T-cell (primary cell): ENCODE measurements at regions of chr1 and their contacts with region 1.

Region 1: GRCh38 chr1:27618341-27619082 is 14.6 kb upstream of the AHDC1 start:
- DNase-seq: peak in 30 of 35 experiments; percentile 12 to 78 (median 48)
- ATAC-seq: peak; percentile 93 to 99 (median 96)
- H3K4me3 ChIP-seq: no peak overlapping the region
- H3K4me3 Mint-ChIP-seq: peak overlapping the region in 2 of 3 donors; percentile 7 to 37
- H3K27ac ChIP-seq: peak overlapping the region; percentile 74
- H3K27ac Mint-ChIP-seq: peak overlapping the region; percentile 94 to 97
- H3K4me1 ChIP-seq: peaks cover 46 to 86% of the 10 kb centered on the region in 2 experiments
- H3K4me1 Mint-ChIP-seq: peaks cover 58 to 65% (median 63%) of the 10 kb centered on the region in 3 donors
- H3K27me3 ChIP-seq: no peaks in the 10 kb centered on the region
- H3K27me3 Mint-ChIP-seq: no peaks in the 10 kb centered on the region

Region 2: GRCh38 chr1:27300341-27301051 is 318.0 kb before region 1 on chr1:
- CTCF ChIA-PET with region 1: no interaction called
- POLR2A ChIA-PET with region 1: interaction called in 1 of 2 experiments, 19 read pairs
- DNase-seq: peak; percentile 46 to 92 (median 70)
- ATAC-seq: peak; percentile 83 to 90 (median 88)
- H3K4me3 ChIP-seq: no peak overlapping the region
- H3K4me3 Mint-ChIP-seq: no peak overlapping the region
- H3K27ac ChIP-seq: no peak overlapping the region
- H3K27ac Mint-ChIP-seq: no peak overlapping the region
- H3K4me1 ChIP-seq: peaks cover 0 to 8% of the 10 kb centered on the region in 2 experiments
- H3K4me1 Mint-ChIP-seq: peaks cover 0 to 5% (median 2%) of the 10 kb centered on the region in 3 donors
- H3K27me3 ChIP-seq: no peaks in the 10 kb centered on the region
- H3K27me3 Mint-ChIP-seq: no peaks in the 10 kb centered on the region

Region 3: DNA sequence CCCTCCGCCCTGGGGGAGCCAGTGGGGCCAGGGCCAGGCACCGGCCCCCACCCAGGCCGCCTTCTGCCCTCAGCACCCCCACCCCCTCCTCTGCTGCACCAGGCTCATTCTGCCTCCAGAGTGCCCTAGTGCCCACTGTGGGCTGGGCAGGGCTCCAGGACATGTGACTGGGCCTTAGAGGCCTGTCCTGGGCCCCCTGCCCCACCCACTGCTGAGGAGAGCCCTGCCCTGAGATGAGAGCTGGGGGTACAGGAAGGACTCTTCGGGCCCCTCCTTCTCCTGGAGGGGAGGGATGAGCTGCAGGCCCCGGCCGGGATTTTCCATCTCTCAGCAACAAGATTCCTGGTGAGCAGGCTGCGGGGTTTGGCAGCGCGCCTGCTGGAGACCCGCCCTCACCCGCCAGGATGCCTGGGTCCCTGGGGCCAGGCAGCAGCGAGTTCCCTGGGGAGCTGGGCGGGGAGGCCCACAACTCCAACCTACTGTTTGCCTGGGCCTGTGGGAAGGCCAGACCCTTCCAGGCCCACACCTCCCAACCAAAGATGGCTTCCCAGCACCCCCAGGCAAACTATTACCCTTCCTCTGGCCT is 28.6 kb before region 1 on chr1:
- CTCF ChIA-PET with region 1: no interaction called
- POLR2A ChIA-PET with region 1: no interaction called
- DNase-seq: no peak
- ATAC-seq: no peak
- H3K4me3 ChIP-seq: no peak overlapping the region
- H3K4me3 Mint-ChIP-seq: no peak overlapping the region
- H3K27ac ChIP-seq: no peak overlapping the region
- H3K27ac Mint-ChIP-seq: no peak overlapping the region
- H3K4me1 ChIP-seq: peaks cover 4 to 18% of the 10 kb centered on the region in 2 experiments
- H3K4me1 Mint-ChIP-seq: peaks cover 0 to 3% (median 0%) of the 10 kb centered on the region in 3 donors
- H3K27me3 ChIP-seq: peaks cover 0 to 5% of the 10 kb centered on the region in 2 experiments
- H3K27me3 Mint-ChIP-seq: no peaks in the 10 kb centered on the region